ENCODE measurements at regions of chr6 and their contacts with region 1.

Region 1: DNA sequence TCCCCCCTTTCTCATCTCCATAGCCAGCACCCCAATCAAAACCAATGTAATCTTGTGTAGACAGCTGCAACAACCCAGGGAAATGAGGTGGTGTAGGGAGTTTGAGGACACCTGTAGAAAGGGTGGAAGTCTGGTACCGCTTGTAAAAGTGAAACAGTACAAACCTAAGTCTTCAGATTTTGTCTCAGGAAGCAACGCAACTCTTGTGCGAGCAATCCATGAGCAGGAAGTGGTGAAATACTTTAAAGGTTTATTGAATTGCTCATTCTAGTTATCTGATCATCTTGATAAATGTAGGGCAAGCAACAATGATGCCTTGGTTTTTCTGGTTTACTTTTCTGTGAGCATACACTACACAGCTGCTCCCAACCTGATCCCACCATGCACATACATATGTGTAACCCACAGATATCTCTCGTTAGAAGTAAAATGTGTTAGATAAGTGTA is 71.1 kb upstream of the THEMIS start:
- DNase-seq: peak; percentile 65
- ATAC-seq: peak; percentile 76
- H3K4me3 Mint-ChIP-seq: peak overlapping the region; percentile 80
- H3K27ac Mint-ChIP-seq: peak overlapping the region; percentile 96
- H3K4me1 Mint-ChIP-seq: peaks cover 79% of the 10 kb centered on the region
- H3K27me3 Mint-ChIP-seq: no peaks in the 10 kb centered on the region
- CTCF ChIP-seq: no peak

Region 2: DNA sequence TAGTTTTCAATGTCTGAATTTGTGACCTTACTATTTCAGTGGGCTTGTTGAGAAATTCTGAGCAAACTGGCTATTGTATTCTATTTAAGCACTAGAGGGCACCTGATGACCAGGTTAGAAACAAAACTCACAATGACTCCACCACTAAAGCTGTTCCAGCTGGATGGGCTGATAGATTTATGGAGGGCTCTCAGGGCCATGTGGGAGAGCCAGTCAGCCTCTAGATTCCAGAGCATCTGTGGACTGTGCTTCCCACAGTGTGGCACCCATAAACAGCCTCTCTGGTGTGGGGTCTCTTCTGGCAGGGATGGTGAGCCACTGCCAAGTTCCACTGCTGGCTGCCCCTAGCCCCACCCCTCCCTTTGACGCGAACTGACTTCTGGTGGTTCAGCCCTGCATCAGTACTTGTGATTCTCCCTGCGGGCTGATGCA is 365.8 kb before region 1 on chr6:
- CTCF ChIA-PET with region 1: no interaction called
- POLR2A ChIA-PET with region 1: no interaction called
- intact Hi-C with region 1: no loop called
- DNase-seq: peak; percentile 3
- ATAC-seq: peak; percentile 45
- H3K4me3 Mint-ChIP-seq: no peak overlapping the region
- H3K27ac Mint-ChIP-seq: no peak overlapping the region
- H3K4me1 Mint-ChIP-seq: no peaks in the 10 kb centered on the region
- H3K27me3 Mint-ChIP-seq: peaks cover 1% of the 10 kb centered on the region
- CTCF ChIP-seq: peak; percentile 35

Region 3: GRCh38 chr6:127900935-127901334 is 71.0 kb before region 1 on chr6 and contains the start of gene THEMIS:
- CTCF ChIA-PET with region 1: interaction called, 6 read pairs
- POLR2A ChIA-PET with region 1: interaction called, 12 read pairs
- intact Hi-C with region 1: loop called (anchors 2 kb)
- DNase-seq: peak; percentile 78
- ATAC-seq: peak; percentile 72
- H3K4me3 Mint-ChIP-seq: peak within 1 kb of the TSS; percentile 99
- H3K27ac Mint-ChIP-seq: peak within 1 kb of the TSS; percentile 100
- H3K4me1 Mint-ChIP-seq: peaks cover 44% of the 10 kb centered on the region
- H3K27me3 Mint-ChIP-seq: no peaks in the 10 kb centered on the region
- CTCF ChIP-seq: no peak
- total RNA-seq, gene THEMIS: 79.5 to 80.1 TPM

Region 4: DNA sequence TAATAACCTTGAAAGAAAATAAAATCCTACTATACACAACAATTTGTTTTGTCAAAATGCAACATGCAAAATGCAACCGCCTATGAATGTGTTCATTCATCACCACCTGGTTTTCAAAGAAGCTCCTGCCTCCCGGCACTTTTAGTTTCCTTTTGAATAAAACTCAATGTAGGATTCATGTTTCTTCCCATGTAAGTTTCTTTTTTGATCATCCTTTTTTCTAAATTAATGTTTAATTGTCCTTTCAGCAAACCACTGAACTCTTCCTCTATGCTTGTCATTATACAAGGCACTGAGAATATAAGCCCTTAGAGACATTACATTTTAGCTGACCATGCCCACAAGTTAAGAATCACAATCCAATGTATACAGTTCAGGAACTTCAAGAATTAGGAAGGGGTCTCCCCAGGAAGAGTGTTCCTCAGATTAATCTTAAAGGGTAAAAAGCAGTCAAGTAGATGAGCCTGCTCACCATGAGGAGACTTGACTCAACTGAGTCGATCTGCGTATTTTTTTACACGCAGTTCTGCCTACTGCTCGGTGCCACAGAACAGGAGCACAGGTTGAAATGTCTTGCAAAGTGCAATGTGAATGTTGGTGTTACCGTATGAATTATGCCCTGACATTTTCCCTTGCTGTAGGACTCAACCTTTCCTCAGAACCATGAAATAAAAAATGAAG is 63.9 kb before region 1 on chr6:
- CTCF ChIA-PET with region 1: interaction called, 10 read pairs
- POLR2A ChIA-PET with region 1: interaction called, 12 read pairs
- intact Hi-C with region 1: no loop called
- DNase-seq: peak; percentile 60
- ATAC-seq: peak; percentile 72
- H3K4me3 Mint-ChIP-seq: peak overlapping the region; percentile 70
- H3K27ac Mint-ChIP-seq: peak overlapping the region; percentile 88
- H3K4me1 Mint-ChIP-seq: peaks cover 71% of the 10 kb centered on the region
- H3K27me3 Mint-ChIP-seq: no peaks in the 10 kb centered on the region
- CTCF ChIP-seq: no peak

Region 5: GRCh38 chr6:127938701-127939100 is 33.3 kb before region 1 on chr6:
- CTCF ChIA-PET with region 1: interaction called, 5 read pairs
- POLR2A ChIA-PET with region 1: interaction called, 3 read pairs
- intact Hi-C with region 1: loop called (anchors 1 kb)
- DNase-seq: no peak
- ATAC-seq: peak; percentile 24
- H3K4me3 Mint-ChIP-seq: no peak overlapping the region
- H3K27ac Mint-ChIP-seq: peak overlapping the region; percentile 82
- H3K4me1 Mint-ChIP-seq: peaks cover 67% of the 10 kb centered on the region
- H3K27me3 Mint-ChIP-seq: no peaks in the 10 kb centered on the region
- CTCF ChIP-seq: no peak

Region 6: GRCh38 chr6:127951172-127951917 is 20.6 kb before region 1 on chr6:
- CTCF ChIA-PET with region 1: interaction called, 15 read pairs
- POLR2A ChIA-PET with region 1: interaction called, 11 read pairs
- intact Hi-C with region 1: no loop called
- DNase-seq: no peak
- ATAC-seq: peak; percentile 53
- H3K4me3 Mint-ChIP-seq: peak overlapping the region; percentile 49
- H3K27ac Mint-ChIP-seq: peak overlapping the region; percentile 94
- H3K4me1 Mint-ChIP-seq: peaks cover 68% of the 10 kb centered on the region
- H3K27me3 Mint-ChIP-seq: no peaks in the 10 kb centered on the region
- CTCF ChIP-seq: no peak

Region 7: GRCh38 chr6:127956260-127956874 is 15.6 kb before region 1 on chr6:
- CTCF ChIA-PET with region 1: interaction called, 15 read pairs
- POLR2A ChIA-PET with region 1: interaction called, 11 read pairs
- intact Hi-C with region 1: no loop called
- DNase-seq: no peak
- ATAC-seq: no peak
- H3K4me3 Mint-ChIP-seq: no peak overlapping the region
- H3K27ac Mint-ChIP-seq: no peak overlapping the region
- H3K4me1 Mint-ChIP-seq: peaks cover 42% of the 10 kb centered on the region
- H3K27me3 Mint-ChIP-seq: no peaks in the 10 kb centered on the region
- CTCF ChIP-seq: no peak

Region 8: DNA sequence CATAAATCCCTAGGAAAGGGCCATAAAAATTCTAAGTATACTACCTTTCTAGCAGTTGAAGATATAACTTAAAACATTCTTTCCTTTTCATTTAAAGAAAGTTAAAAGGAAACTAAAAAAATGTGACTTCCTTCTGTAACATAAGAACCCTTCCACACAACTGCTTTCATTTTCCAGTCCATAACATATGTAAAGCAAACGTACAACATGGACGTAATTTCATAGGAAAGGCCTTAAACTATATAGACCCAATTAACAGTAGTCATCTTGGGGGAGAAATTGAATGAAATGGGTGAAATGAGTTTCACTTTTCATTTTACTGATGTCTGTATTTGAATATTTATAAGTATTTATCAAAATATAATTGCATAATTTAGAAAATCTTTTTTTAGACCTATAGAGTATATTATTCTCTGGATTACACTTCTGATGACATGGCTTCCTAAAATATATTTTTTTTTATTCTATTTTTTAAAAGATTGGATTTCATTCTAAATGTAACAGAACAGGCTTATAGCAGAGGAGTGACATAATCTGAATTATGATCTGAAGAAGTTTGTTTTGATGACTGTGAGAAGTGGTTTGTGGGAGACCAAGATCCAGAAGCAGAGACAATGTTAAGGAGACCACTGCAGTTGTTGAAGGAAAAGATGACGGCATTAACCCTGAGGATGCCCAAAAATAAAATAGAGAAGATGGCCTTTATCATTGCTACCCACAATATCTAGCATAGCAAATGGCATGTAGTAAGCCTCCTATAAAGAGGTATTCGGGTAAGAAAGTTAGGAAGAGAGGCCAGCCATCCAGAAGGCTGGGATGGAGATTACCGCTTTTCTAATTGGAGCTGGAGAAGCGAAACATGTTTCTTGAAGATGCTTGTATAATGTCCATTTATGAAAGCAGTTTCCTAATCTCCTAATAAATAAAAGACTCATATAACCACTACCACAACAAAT is 288.0 kb after region 1 on chr6:
- CTCF ChIA-PET with region 1: no interaction called
- POLR2A ChIA-PET with region 1: no interaction called
- intact Hi-C with region 1: loop called (anchors 10 kb)
- DNase-seq: no peak
- ATAC-seq: peak; percentile 64
- H3K4me3 Mint-ChIP-seq: peak overlapping the region; percentile 68
- H3K27ac Mint-ChIP-seq: peak overlapping the region; percentile 77
- H3K4me1 Mint-ChIP-seq: peaks cover 26% of the 10 kb centered on the region
- H3K27me3 Mint-ChIP-seq: no peaks in the 10 kb centered on the region
- CTCF ChIP-seq: no peak